AG04449 (cell line): ENCODE measurements at regions of chr14 and their contacts with region 1.

Region 1: GRCh38 chr14:35374273-35374681 is 30.3 kb downstream of the NFKBIA start:
- DNase-seq: peak; percentile 94
- H3K4me3 ChIP-seq: no peak overlapping the region
- CTCF ChIP-seq: no peak

Region 2: GRCh38 chr14:35385042-35385839 is 11.0 kb after region 1 on chr14:
- CTCF ChIA-PET with region 1: interaction called, 10 read pairs
- POLR2A ChIA-PET with region 1: no interaction called
- DNase-seq: peak; percentile 91
- H3K4me3 ChIP-seq: 0 out of 2 replicates have a peak overlapping the region, but pooled peaks have one; percentile 12
- CTCF ChIP-seq: no peak